ENCODE measurements at regions of chr19 and their contacts with region 1.

Region 1: GRCh38 chr19:35114353-35115176 is 1.1 kb upstream of the FXYD3 start:
- DNase-seq: peak; percentile 86
- ATAC-seq: peak; percentile 87

Region 2: GRCh38 chr19:35135389-35135909 is 20.9 kb after region 1 on chr19:
- intact Hi-C with region 1: loop called (anchors 1 kb)
- DNase-seq: peak; percentile 91
- ATAC-seq: peak; percentile 60

Region 3: GRCh38 chr19:35195830-35196229 is 81.3 kb after region 1 on chr19:
- intact Hi-C with region 1: no loop called
- DNase-seq: no peak
- ATAC-seq: no peak